H1 (cell line): ENCODE measurements at regions of chr7 and their contacts with region 1.

Region 1: DNA sequence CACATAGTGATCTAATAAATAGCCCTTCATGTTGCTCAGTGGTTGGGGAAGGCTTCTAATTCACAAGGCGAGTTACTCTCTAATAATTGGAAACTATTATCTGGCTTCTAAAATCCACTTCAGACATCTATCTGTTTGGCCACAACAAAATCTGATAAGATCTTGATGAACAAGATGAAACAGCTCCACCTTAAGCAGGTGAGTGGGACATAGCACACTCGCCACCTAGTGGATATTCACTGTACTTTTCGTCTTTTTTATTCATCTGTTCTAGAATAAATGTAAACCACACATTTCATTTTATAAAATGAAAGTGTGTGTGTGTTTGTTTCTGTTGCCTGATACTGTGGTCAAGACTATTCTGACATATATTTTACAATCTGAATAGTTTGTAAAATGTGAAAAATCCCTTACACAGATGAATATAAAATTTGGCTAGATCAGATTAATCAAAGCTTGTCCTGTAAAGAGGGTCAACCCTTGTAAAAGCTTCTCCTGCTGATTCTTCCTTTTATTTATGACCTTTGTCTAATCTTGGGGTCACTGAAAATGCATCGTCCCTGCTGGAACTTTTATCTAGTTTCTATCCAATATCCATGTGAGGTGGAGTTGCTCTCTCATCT is 26.5 kb upstream of the CNTNAP2 start:
- DNase-seq: no peak
- H3K4me3 ChIP-seq: no peak overlapping the region
- H3K27ac ChIP-seq: no peak overlapping the region
- H3K4me1 ChIP-seq: no peaks in the 10 kb centered on the region
- H3K27me3 ChIP-seq: peaks cover 0 to 2% (median 0%) of the 10 kb centered on the region in 4 experiments; a peak in 1 of 7 replicates
- CTCF ChIP-seq: peak in 2 of 3 experiments; percentile 71 to 81; a peak in 3 of 4 replicates
- EP300 ChIP-seq: no peak
- POLR2A ChIP-seq: no peak
- RAD21 ChIP-seq: peak; percentile 86 to 88

Region 2: GRCh38 chr7:145902123-145902522 is 188.0 kb before region 1 on chr7:
- CTCF ChIA-PET with region 1: interaction called, 17 read pairs
- POLR2A ChIA-PET with region 1: no interaction called
- DNase-seq: peak in 1 of 2 experiments; percentile 50
- H3K4me3 ChIP-seq: no peak overlapping the region
- H3K27ac ChIP-seq: no peak overlapping the region
- H3K4me1 ChIP-seq: peaks cover 0 to 5% (median under 1%) of the 10 kb centered on the region in 4 experiments; a peak in 5 of 7 replicates
- H3K27me3 ChIP-seq: no peaks in the 10 kb centered on the region
- CTCF ChIP-seq: peak; percentile 30 to 73 (median 41); a peak in 3 of 4 replicates
- EP300 ChIP-seq: no peak
- POLR2A ChIP-seq: no peak
- RAD21 ChIP-seq: peak; percentile 32 to 45

Region 3: GRCh38 chr7:146126767-146127509 is 36.8 kb after region 1 on chr7:
- CTCF ChIA-PET with region 1: interaction called, 15 read pairs
- POLR2A ChIA-PET with region 1: no interaction called
- DNase-seq: no peak
- H3K4me3 ChIP-seq: no peak overlapping the region
- H3K27ac ChIP-seq: no peak overlapping the region
- H3K4me1 ChIP-seq: no peaks in the 10 kb centered on the region
- H3K27me3 ChIP-seq: no peaks in the 10 kb centered on the region
- CTCF ChIP-seq: peak in 2 of 3 experiments; percentile 18 to 25; a peak in 2 of 4 replicates
- EP300 ChIP-seq: no peak
- POLR2A ChIP-seq: no peak
- RAD21 ChIP-seq: peak; percentile 39 to 43; a peak in 3 of 4 replicates

Region 4: DNA sequence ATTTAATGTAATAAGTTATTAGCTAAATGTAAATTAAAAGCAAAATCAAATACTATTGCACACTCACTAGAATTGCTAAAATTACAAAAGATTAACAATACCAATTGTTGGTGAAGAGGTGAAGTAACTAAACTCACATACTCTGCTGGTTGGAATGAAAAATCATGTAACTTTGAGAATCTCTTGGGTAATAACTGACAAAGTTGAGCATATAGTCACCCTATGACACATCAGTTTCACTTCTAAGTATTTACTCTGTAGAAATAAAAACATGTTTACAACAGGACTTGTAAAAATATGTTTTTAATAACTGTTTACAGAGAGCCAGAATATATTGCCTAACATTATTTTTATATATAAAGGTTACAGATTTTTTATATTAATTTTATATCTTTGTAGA is 60.0 kb after region 1 on chr7:
- CTCF ChIA-PET with region 1: no interaction called
- POLR2A ChIA-PET with region 1: no interaction called
- DNase-seq: no peak
- H3K4me3 ChIP-seq: no peak overlapping the region
- H3K27ac ChIP-seq: no peak overlapping the region
- H3K4me1 ChIP-seq: peaks cover 2 to 8% (median 4%) of the 10 kb centered on the region in 4 experiments; a peak in 5 of 7 replicates
- H3K27me3 ChIP-seq: no peaks in the 10 kb centered on the region
- CTCF ChIP-seq: no peak
- EP300 ChIP-seq: no peak
- POLR2A ChIP-seq: no peak
- RAD21 ChIP-seq: no peak